MCF 10A (cell line): ENCODE measurements at regions of chr14 and their contacts with region 1.

Region 1: DNA sequence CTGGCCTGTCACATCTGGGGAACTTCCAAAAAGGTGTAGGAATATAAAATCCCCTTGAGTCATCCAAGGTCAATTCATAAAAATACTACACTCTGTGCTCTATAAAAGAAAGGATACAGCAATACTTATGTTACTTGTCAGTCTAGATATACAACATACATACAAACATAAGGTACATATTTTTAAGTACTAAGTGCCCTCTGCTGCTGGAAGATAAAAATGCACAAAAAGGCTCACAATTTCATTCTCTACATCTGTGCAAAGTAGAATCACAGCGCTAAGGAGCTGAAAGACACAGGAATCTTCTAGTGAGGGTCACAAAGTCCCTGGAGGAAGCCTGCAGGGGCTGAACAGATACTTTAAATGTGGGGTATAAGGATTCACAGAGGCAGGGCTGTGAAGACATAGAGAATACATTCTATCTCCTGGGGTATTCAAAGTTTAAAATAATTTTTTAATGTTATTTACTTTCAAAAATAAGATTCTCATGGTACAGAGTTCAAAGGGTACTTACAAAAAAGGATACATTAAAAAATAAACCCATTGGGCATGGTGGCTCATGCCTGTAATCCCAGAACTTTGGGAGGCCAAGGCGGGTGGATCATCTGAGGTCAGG is 10.2 kb upstream of the GOLGA5 start:
- DNase-seq: peak; percentile 64
- H3K4me3 Mint-ChIP-seq: no peak overlapping the region
- H3K27ac Mint-ChIP-seq: no peak overlapping the region
- H3K4me1 Mint-ChIP-seq: peaks cover 4% of the 10 kb centered on the region
- H3K27me3 Mint-ChIP-seq: no peaks in the 10 kb centered on the region
- CTCF ChIP-seq: peak; percentile 60

Region 2: DNA sequence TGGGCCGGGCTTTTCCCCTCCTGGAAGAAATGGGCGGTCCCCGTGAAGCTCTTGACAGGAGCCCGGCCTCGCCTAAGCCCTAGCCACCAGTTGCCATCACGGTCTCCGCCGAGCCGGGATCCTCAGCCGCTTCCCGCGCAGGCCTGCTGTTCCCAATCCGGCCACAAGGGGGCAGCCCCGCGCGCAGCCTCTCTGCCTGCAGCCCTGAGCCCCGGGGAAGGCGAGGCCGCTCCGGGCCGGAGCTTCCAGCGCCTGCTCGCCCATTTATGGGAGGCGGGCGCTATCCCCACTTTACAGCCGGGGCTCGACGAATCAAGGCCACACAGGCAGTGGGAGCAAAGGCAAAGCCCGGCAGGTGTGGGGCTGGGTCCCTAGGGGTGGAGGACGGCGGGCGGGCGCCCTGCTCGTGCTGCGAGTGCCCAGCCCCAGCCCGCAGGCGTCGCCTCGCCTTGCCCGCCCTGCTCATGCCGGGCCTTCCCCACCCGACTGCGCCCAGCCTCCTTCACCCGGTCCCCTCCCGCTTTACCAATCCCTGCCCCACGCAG is 97.0 kb before region 1 on chr14:
- CTCF ChIA-PET with region 1: interaction called, 23 read pairs
- POLR2A ChIA-PET with region 1: no interaction called
- intact Hi-C with region 1: no loop called
- DNase-seq: peak; percentile 48
- H3K4me3 Mint-ChIP-seq: no peak overlapping the region
- H3K27ac Mint-ChIP-seq: no peak overlapping the region
- H3K4me1 Mint-ChIP-seq: no peaks in the 10 kb centered on the region
- H3K27me3 Mint-ChIP-seq: no peaks in the 10 kb centered on the region
- CTCF ChIP-seq: peak; percentile 91

Region 3: GRCh38 chr14:92719890-92720323 is 64.0 kb before region 1 on chr14:
- CTCF ChIA-PET with region 1: interaction called, 106 read pairs
- POLR2A ChIA-PET with region 1: no interaction called
- intact Hi-C with region 1: no loop called
- DNase-seq: no peak
- H3K4me3 Mint-ChIP-seq: no peak overlapping the region
- H3K27ac Mint-ChIP-seq: no peak overlapping the region
- H3K4me1 Mint-ChIP-seq: no peaks in the 10 kb centered on the region
- H3K27me3 Mint-ChIP-seq: no peaks in the 10 kb centered on the region
- CTCF ChIP-seq: no peak

Region 4: DNA sequence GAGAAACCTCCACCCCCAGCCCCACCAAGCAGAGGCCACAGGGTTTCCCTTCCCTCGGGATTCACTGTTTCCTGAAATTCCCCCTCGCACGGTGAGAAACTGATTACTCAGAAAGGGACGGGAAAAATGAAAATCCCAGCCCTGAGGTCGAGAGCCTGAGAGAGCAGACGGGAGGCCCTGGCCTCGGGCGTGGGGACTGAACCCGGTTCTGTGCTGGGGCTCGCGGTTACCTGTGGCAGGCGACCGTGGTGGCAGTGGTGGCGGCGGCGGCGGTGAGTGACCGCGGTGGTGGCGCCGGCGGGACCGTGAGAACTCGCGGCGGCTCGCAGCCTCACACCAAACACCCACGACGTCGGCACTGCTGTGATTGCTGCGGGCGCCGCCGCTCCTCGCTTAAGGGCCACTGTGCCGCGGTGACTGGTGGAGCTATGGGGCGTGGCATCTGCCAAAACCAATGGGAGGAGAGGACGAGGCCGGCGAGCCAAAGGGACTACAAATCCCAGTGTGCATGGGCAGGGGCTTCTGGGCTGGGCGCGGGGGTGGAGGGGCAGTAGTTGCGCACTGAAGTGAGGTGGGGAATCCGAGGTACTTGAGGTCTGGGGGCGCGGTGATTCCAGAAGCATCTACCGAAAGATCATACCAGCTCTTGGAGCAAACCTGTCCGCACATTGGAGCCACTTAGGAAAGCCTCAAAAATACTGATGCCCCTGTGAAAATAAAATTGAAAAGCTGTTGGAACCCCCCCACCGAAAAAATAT is 35.5 kb before region 1 on chr14 and contains the start of gene LGMN:
- CTCF ChIA-PET with region 1: interaction called, 4 read pairs
- POLR2A ChIA-PET with region 1: no interaction called
- intact Hi-C with region 1: loop called (anchors 5 kb)
- DNase-seq: peak; percentile 95
- H3K4me3 Mint-ChIP-seq: peak within 1 kb of the TSS; percentile 95
- H3K27ac Mint-ChIP-seq: peak within 1 kb of the TSS; percentile 68
- H3K4me1 Mint-ChIP-seq: peaks cover 17% of the 10 kb centered on the region
- H3K27me3 Mint-ChIP-seq: no peaks in the 10 kb centered on the region
- CTCF ChIP-seq: no peak
- total RNA-seq, gene LGMN: 16.6 and 20.0 TPM in 2 replicates

Region 5: GRCh38 chr14:93073910-93074769 is 290.2 kb after region 1 on chr14:
- CTCF ChIA-PET with region 1: no interaction called
- POLR2A ChIA-PET with region 1: no interaction called
- intact Hi-C with region 1: no loop called
- DNase-seq: peak; percentile 60
- H3K4me3 Mint-ChIP-seq: no peak overlapping the region
- H3K27ac Mint-ChIP-seq: no peak overlapping the region
- H3K4me1 Mint-ChIP-seq: peaks cover 19% of the 10 kb centered on the region
- H3K27me3 Mint-ChIP-seq: no peaks in the 10 kb centered on the region
- CTCF ChIP-seq: no peak